Panc1 (cell line): ENCODE measurements at regions of chr10 and their contacts with region 1.

Region 1: GRCh38 chr10:3946234-3947229 is 161.5 kb upstream of the KLF6 start:
- DNase-seq: no peak
- ATAC-seq: peak; percentile 76
- H3K4me3 ChIP-seq: peak overlapping the region; percentile 16 to 33
- H3K27ac ChIP-seq: peak overlapping the region; percentile 98
- H3K4me1 ChIP-seq: peaks cover 14% of the 10 kb centered on the region
- H3K27me3 ChIP-seq: no peaks in the 10 kb centered on the region
- CTCF ChIP-seq: no peak

Region 2: GRCh38 chr10:3895045-3895631 is 51.4 kb before region 1 on chr10:
- CTCF ChIA-PET with region 1: no interaction called
- POLR2A ChIA-PET with region 1: interaction called, 17 read pairs
- in situ Hi-C with region 1: no loop called
- intact Hi-C with region 1: no loop called
- DNase-seq: no peak
- ATAC-seq: peak; percentile 42
- H3K4me3 ChIP-seq: no peak overlapping the region
- H3K27ac ChIP-seq: peak overlapping the region; percentile 100
- H3K4me1 ChIP-seq: peaks cover 46% of the 10 kb centered on the region
- H3K27me3 ChIP-seq: no peaks in the 10 kb centered on the region
- CTCF ChIP-seq: no peak

Region 3: GRCh38 chr10:4431114-4431863 is 484.8 kb after region 1 on chr10:
- CTCF ChIA-PET with region 1: no interaction called
- POLR2A ChIA-PET with region 1: interaction called, 16 read pairs
- in situ Hi-C with region 1: no loop called
- intact Hi-C with region 1: no loop called
- DNase-seq: no peak
- ATAC-seq: peak; percentile 93
- H3K4me3 ChIP-seq: peak overlapping the region in 1 of 2 experiments; percentile 12; a peak in 2 of 4 replicates
- H3K27ac ChIP-seq: peak overlapping the region; percentile 84
- H3K4me1 ChIP-seq: no peaks in the 10 kb centered on the region; the same call in none of the 2 replicates
- H3K27me3 ChIP-seq: no peaks in the 10 kb centered on the region
- CTCF ChIP-seq: no peak